Calu3 (cell line): ENCODE measurements at regions of chr1 and their contacts with region 1.

Region 1: DNA sequence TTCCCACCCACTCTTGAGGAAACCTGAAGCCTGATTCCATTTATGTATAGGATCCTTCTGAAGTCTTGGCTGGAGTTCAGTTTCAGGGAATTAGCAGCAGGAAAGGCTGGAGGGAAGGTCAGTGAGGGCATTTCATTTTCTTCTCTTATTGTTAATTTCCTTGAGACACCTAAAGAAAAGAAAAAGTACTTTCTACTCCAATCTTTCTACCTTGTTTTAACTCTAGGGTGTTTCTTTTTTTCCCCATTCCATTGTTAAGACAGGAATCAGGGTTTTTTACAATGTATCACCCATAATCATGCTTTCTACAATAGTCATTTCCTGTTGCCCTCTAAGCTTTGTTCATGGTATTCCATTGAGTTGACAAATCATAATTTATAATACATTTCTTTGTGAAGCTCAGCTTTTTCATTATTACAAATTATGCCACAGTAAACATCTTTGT is 27.4 kb downstream of the SNRPE start:
- DNase-seq: no peak
- H3K4me3 Mint-ChIP-seq: no peak overlapping the region
- H3K27ac Mint-ChIP-seq: peak overlapping the region; percentile 82
- H3K4me1 Mint-ChIP-seq: peaks cover 15% of the 10 kb centered on the region
- H3K27me3 Mint-ChIP-seq: no peaks in the 10 kb centered on the region
- CTCF ChIP-seq: no peak

Region 2: DNA sequence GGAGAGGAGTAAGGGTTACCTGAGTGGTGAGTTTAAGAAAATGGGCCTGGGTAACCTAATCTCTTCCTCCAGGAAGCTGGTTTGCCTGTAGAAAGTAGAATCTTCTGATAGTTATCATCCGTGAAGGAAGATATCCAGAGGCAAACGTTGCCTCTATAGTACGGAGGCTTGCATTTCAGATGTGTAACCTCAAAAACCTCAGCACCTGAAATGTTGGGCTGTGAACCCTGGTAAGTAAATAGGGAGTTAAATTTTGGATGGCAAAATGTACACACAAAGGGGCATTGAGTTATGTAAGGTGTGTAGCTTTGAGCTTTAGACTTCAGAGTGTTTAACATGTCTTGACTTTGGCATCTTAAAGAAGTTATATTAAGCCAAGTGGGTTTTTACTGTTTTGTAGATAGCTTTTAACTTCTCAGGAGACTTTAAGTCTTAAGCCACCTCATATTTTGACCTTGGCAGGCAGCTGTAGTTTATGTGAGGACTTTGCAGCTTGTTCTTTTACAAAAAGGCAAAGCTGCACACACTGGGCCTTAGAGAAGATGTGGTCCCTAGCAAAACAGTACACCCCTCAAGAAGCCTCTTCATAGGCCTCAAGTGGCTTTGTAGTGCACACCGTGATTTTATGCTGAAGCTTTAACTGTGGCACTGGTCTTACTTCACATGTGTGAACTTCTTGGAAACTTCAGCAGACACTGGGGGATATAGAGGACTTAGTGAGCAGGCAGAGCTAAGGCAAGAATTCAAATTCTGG is 56.0 kb after region 1 on chr1:
- CTCF ChIA-PET with region 1: interaction called, 4 read pairs
- intact Hi-C with region 1: loop called (anchors 10 kb)
- DNase-seq: no peak
- H3K4me3 Mint-ChIP-seq: no peak overlapping the region
- H3K27ac Mint-ChIP-seq: no peak overlapping the region
- H3K4me1 Mint-ChIP-seq: no peaks in the 10 kb centered on the region
- H3K27me3 Mint-ChIP-seq: peaks cover 37% of the 10 kb centered on the region
- CTCF ChIP-seq: no peak

Region 3: DNA sequence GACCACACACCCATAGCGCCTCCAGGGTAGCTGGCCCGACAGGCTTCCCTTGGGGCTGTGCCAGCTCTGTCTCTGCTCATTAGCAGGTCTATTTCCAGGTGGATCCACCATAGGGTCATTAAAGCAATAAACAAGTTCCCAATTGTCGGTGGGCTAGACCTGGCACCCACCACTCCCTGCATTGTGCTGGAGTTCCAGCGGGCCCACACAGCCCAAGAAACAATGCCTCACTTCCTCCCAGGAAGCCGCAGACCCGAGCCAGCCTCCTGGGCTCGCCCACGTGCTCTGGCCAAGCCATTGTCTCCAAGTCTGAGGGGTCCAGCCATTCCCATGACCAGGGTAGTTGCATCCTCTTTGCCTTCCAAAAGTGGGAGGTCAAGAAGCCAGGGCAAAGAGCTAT is 156.6 kb after region 1 on chr1:
- CTCF ChIA-PET with region 1: no interaction called
- intact Hi-C with region 1: no loop called
- DNase-seq: no peak
- H3K4me3 Mint-ChIP-seq: no peak overlapping the region
- H3K27ac Mint-ChIP-seq: no peak overlapping the region
- H3K4me1 Mint-ChIP-seq: no peaks in the 10 kb centered on the region
- H3K27me3 Mint-ChIP-seq: no peaks in the 10 kb centered on the region
- CTCF ChIP-seq: no peak